PC-9 (cell line): ENCODE measurements at regions of chr6 and their contacts with region 1.

Region 1: GRCh38 chr6:37018198-37019064 is 13.0 kb downstream of the FGD2 start:
- DNase-seq: peak; percentile 81 to 84
- H3K4me3 ChIP-seq: no peak overlapping the region
- H3K27ac ChIP-seq: peak overlapping the region; percentile 67
- H3K4me1 ChIP-seq: peaks cover 48% of the 10 kb centered on the region
- H3K27me3 ChIP-seq: no peaks in the 10 kb centered on the region
- CTCF ChIP-seq: peak; percentile 90

Region 2: GRCh38 chr6:36615018-36615761 is 403.2 kb before region 1 on chr6:
- CTCF ChIA-PET with region 1: interaction called, 10 read pairs
- POLR2A ChIA-PET with region 1: no interaction called
- intact Hi-C with region 1: no loop called
- DNase-seq: peak; percentile 43 to 63
- H3K4me3 ChIP-seq: no peak overlapping the region
- H3K27ac ChIP-seq: no peak overlapping the region
- H3K4me1 ChIP-seq: peaks cover 24% of the 10 kb centered on the region
- H3K27me3 ChIP-seq: no peaks in the 10 kb centered on the region
- CTCF ChIP-seq: peak; percentile 83

Region 3: GRCh38 chr6:36874443-36875249 is 143.8 kb before region 1 on chr6 and contains the start of gene PPIL1:
- CTCF ChIA-PET with region 1: interaction called, 5 read pairs
- POLR2A ChIA-PET with region 1: interaction called, 3 read pairs
- intact Hi-C with region 1: loop called (anchors 5 kb)
- DNase-seq: peak; percentile 79 to 81
- H3K4me3 ChIP-seq: peak within 1 kb of the TSS; percentile 78
- H3K27ac ChIP-seq: peak within 1 kb of the TSS; percentile 81
- H3K4me1 ChIP-seq: peaks cover 19% of the 10 kb centered on the region
- H3K27me3 ChIP-seq: no peaks in the 10 kb centered on the region
- CTCF ChIP-seq: no peak
- total RNA-seq, gene PPIL1: 19.0 and 28.4 TPM in 2 replicates

Region 4: DNA sequence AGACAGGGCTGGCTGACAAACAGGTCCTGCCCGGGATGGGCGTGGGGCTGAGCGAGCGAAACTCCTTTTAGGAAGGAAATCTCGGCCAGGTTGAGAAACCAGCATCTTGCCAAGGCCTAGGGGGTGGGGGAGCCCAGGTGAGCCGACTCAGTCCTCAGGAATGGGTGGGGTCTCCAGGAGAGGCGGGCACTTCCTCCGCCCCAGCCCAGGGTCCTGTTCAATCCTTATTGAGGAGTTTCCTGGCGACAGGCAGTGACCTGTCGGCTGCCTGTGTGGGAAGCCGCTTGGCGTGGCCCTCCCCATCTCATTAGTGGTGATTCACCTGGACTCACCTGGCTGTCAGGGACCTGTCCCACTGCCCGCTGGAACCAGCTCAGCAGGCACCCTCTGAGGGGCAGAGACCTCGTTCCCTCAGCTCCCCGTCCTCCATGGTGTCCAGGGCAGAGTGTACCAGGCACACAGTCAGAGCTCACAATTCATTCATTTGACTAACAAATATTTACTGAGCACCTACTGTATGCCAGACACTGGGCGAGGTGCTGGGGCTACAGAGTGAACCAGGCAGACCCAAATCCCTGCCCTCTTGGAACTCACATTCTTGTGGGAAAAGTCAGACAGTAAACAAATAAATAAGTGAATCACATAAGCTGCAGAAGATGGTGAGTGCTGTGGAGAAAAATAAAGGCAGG is 38.2 kb after region 1 on chr6:
- CTCF ChIA-PET with region 1: interaction called, 4 read pairs
- POLR2A ChIA-PET with region 1: no interaction called
- intact Hi-C with region 1: loop called (anchors 1 kb)
- DNase-seq: peak; percentile 97
- H3K4me3 ChIP-seq: peak overlapping the region; percentile 48; the same call in 1 of the 2 replicates
- H3K27ac ChIP-seq: peak overlapping the region; percentile 100
- H3K4me1 ChIP-seq: peaks cover 87% of the 10 kb centered on the region
- H3K27me3 ChIP-seq: no peaks in the 10 kb centered on the region
- CTCF ChIP-seq: no peak

Region 5: DNA sequence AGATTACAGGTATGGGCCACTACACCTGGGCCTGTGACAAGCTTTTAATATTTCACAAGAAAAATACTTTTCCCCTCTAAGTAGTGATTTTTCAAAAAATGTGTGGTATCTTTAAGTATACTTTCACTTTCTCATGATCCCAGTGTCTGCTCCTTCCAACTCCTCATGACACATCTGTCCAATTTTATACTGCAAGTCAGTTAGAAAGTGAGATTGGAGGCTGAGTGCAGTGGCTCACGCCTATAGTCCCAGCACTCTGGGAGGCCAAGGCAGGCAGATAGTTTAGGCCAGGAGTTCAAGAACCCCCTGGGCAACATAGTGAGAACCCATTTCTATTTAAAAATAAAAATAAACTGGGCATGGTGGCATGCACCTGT is 171.7 kb after region 1 on chr6:
- CTCF ChIA-PET with region 1: interaction called, 3 read pairs
- POLR2A ChIA-PET with region 1: interaction called, 14 read pairs
- intact Hi-C with region 1: no loop called
- DNase-seq: no peak
- H3K4me3 ChIP-seq: no peak overlapping the region
- H3K27ac ChIP-seq: peak overlapping the region; percentile 40
- H3K4me1 ChIP-seq: peaks cover 8% of the 10 kb centered on the region; the same call in 1 of the 2 replicates
- H3K27me3 ChIP-seq: no peaks in the 10 kb centered on the region
- CTCF ChIP-seq: no peak

Region 6: DNA sequence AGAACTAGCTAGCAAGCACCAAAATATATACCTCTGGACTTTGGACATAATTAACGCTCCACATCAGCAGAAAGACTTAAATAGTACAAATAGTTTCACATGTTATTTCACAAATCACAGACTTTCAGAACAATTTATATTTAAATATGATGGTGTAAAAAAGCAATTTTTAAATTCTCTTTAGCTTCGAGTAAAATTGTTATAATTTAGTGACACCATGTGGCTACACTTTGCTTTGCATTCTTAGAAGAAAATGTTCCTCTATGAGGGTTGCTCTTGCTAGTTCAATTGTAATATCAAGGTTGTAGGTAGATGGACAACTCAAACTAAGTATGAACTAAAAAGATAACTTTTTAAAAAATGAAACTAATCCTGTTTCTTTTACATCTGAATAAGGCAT is 1552.3 kb after region 1 on chr6:
- CTCF ChIA-PET with region 1: no interaction called
- POLR2A ChIA-PET with region 1: no interaction called
- intact Hi-C with region 1: loop called (anchors 2 kb)
- DNase-seq: no peak
- H3K4me3 ChIP-seq: no peak overlapping the region
- H3K27ac ChIP-seq: no peak overlapping the region
- H3K4me1 ChIP-seq: no peaks in the 10 kb centered on the region
- H3K27me3 ChIP-seq: no peaks in the 10 kb centered on the region
- CTCF ChIP-seq: peak; percentile 63